ENCODE measurements at regions of chr2 and their contacts with region 1.

Region 1: DNA sequence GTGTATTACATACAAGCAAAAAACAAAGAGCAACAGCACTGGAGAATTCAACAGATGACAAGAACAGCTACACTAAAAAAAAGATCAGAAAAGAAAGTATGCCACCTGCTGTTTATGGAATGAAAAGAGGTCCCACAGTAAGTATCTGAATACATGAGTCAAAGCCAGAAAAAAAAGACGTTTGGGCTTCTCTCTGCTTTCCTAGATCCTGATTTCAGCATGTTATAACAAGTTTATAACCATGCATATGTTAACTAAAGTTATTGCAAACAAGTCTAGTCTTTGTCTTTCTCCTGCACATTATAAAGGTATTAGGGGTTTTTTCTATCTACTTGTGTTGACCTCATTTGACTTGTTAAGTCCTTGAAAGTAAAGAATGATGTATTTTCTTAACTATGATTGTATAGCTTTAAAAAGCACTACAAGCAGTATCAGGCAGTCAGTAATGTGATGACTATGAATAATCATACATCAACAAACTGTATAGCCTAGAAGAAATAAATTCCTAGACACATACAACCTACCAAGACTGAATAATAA is 108.5 kb upstream of the COL5A2 start:
- DNase-seq: peak in 5 of 9 donors; percentile 16 to 45 (median 34)
- ATAC-seq: peak; percentile 40
- H3K4me3 ChIP-seq: no peak overlapping the region
- H3K4me3 Mint-ChIP-seq: no peak overlapping the region
- H3K27ac ChIP-seq: no peak overlapping the region
- H3K27ac Mint-ChIP-seq: peak overlapping the region in 4 of 9 donors; percentile 1 to 13 (median 8)
- H3K4me1 ChIP-seq: no peaks in the 10 kb centered on the region
- H3K4me1 Mint-ChIP-seq: peaks cover 5 to 28% (median 16%) of the 10 kb centered on the region in 7 donors
- H3K27me3 ChIP-seq: no peaks in the 10 kb centered on the region
- H3K27me3 Mint-ChIP-seq: no peaks in the 10 kb centered on the region

Region 2: GRCh38 chr2:188524519-188525113 is 763.4 kb before region 1 on chr2:
- CTCF ChIA-PET with region 1: no interaction called
- POLR2A ChIA-PET with region 1: no interaction called
- intact Hi-C with region 1: loop called in 1 of 2 experiments (anchors 5 kb)
- DNase-seq: peak in 6 of 9 donors; percentile 4 to 40 (median 27)
- ATAC-seq: peak; percentile 61
- H3K4me3 ChIP-seq: no peak overlapping the region
- H3K4me3 Mint-ChIP-seq: no peak overlapping the region
- H3K27ac ChIP-seq: no peak overlapping the region
- H3K27ac Mint-ChIP-seq: no peak overlapping the region
- H3K4me1 ChIP-seq: no peaks in the 10 kb centered on the region
- H3K4me1 Mint-ChIP-seq: no peaks in the 10 kb centered on the region
- H3K27me3 ChIP-seq: no peaks in the 10 kb centered on the region
- H3K27me3 Mint-ChIP-seq: peaks cover 0 to 5% (median 2%) of the 10 kb centered on the region in 5 donors

Region 3: DNA sequence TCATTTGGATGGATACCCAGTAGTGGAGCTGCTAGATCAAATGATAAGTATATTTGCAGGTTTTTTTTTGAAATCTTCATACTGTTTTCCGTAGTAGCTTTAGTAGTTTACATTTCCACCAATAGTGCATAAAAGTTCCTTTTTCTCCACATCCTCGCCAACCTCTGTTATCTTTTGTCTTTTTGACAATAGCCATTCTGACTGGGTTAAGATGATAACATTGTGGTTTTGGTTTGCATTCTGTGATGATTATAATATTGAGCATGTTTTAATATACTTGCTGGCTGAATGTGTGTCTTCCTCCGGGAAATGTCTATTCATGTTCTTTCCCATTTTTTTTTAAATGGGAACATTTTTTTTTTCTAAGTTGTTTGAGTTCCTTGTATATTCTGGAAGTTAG is 736.4 kb before region 1 on chr2:
- CTCF ChIA-PET with region 1: no interaction called
- POLR2A ChIA-PET with region 1: no interaction called
- intact Hi-C with region 1: loop called in 1 of 2 experiments (anchors 10 kb)
- DNase-seq: no peak
- ATAC-seq: no peak
- H3K4me3 ChIP-seq: no peak overlapping the region
- H3K4me3 Mint-ChIP-seq: no peak overlapping the region
- H3K27ac ChIP-seq: no peak overlapping the region
- H3K27ac Mint-ChIP-seq: no peak overlapping the region
- H3K4me1 ChIP-seq: no peaks in the 10 kb centered on the region
- H3K4me1 Mint-ChIP-seq: no peaks in the 10 kb centered on the region
- H3K27me3 ChIP-seq: no peaks in the 10 kb centered on the region
- H3K27me3 Mint-ChIP-seq: peaks cover 0 to 6% (median 0%) of the 10 kb centered on the region in 5 donors

Region 4: DNA sequence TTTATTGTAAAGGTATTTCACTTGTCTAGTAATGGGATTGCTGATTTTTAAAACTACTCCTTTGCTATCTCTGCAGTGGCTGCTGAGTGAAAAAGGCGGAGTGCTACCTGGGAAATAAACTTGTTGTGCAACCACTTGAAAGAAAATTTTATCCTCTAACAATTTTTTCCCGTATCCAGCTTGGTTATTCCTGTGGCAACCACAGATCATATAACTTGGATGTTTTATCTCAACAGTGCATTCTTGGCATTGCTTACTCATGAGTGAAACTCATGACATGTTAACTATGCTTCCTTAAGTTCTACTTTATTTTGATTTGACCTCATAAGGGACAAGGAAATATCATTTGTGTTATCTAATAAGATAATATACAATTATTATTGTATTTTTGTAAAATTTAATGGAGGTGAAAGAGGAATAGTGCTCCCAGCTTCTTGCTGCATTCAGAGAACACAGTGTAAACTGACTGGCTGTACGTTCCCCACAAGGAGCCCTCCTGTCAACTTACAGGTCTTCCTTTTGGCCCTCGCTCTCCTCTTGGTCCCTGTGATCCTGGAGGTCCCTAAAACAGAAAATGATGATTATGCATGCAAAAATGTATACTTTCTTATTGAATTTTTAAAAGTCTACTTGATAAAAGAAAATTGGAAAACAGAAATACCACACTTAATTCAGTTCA is 191.1 kb before region 1 on chr2:
- CTCF ChIA-PET with region 1: interaction called, 7 read pairs
- POLR2A ChIA-PET with region 1: no interaction called
- intact Hi-C with region 1: loop called (anchors 1 kb)
- DNase-seq: no peak
- ATAC-seq: no peak
- H3K4me3 ChIP-seq: no peak overlapping the region
- H3K4me3 Mint-ChIP-seq: no peak overlapping the region
- H3K27ac ChIP-seq: no peak overlapping the region
- H3K27ac Mint-ChIP-seq: no peak overlapping the region
- H3K4me1 ChIP-seq: no peaks in the 10 kb centered on the region
- H3K4me1 Mint-ChIP-seq: peaks cover 0 to 5% (median 0%) of the 10 kb centered on the region in 7 donors
- H3K27me3 ChIP-seq: no peaks in the 10 kb centered on the region
- H3K27me3 Mint-ChIP-seq: no peaks in the 10 kb centered on the region

Region 5: GRCh38 chr2:189142893-189143759 is 144.9 kb before region 1 on chr2:
- CTCF ChIA-PET with region 1: interaction called, 20 read pairs
- POLR2A ChIA-PET with region 1: no interaction called
- intact Hi-C with region 1: loop called (anchors 1 kb)
- DNase-seq: peak in 8 of 9 donors; percentile 35 to 68 (median 56)
- ATAC-seq: peak; percentile 88
- H3K4me3 ChIP-seq: no peak overlapping the region
- H3K4me3 Mint-ChIP-seq: no peak overlapping the region
- H3K27ac ChIP-seq: no peak overlapping the region
- H3K27ac Mint-ChIP-seq: peak overlapping the region in 1 of 9 donors; percentile 10
- H3K4me1 ChIP-seq: no peaks in the 10 kb centered on the region
- H3K4me1 Mint-ChIP-seq: peaks cover 0 to 6% (median 0%) of the 10 kb centered on the region in 7 donors
- H3K27me3 ChIP-seq: no peaks in the 10 kb centered on the region
- H3K27me3 Mint-ChIP-seq: no peaks in the 10 kb centered on the region

Region 6: GRCh38 chr2:189302274-189302948 is 14.4 kb after region 1 on chr2:
- CTCF ChIA-PET with region 1: interaction called, 7 read pairs
- POLR2A ChIA-PET with region 1: no interaction called
- intact Hi-C with region 1: loop called in 1 of 2 experiments (anchors 1 kb)
- DNase-seq: no peak
- ATAC-seq: no peak
- H3K4me3 ChIP-seq: no peak overlapping the region
- H3K4me3 Mint-ChIP-seq: peak overlapping the region in 8 of 10 donors; percentile 4 to 74 (median 60)
- H3K27ac ChIP-seq: no peak overlapping the region
- H3K27ac Mint-ChIP-seq: peak overlapping the region in 8 of 9 donors; percentile 25 to 95 (median 70)
- H3K4me1 ChIP-seq: peaks cover 56 to 88% of the 10 kb centered on the region in 2 donors
- H3K4me1 Mint-ChIP-seq: peaks cover 57 to 96% (median 91%) of the 10 kb centered on the region in 7 donors
- H3K27me3 ChIP-seq: no peaks in the 10 kb centered on the region
- H3K27me3 Mint-ChIP-seq: no peaks in the 10 kb centered on the region

Region 7: GRCh38 chr2:189347540-189347939 is 59.5 kb after region 1 on chr2:
- CTCF ChIA-PET with region 1: interaction called, 4 read pairs
- POLR2A ChIA-PET with region 1: no interaction called
- intact Hi-C with region 1: loop called in 1 of 2 experiments (anchors 1 kb)
- DNase-seq: peak in 7 of 9 donors; percentile 14 to 58 (median 47)
- ATAC-seq: peak; percentile 52
- H3K4me3 ChIP-seq: no peak overlapping the region
- H3K4me3 Mint-ChIP-seq: no peak overlapping the region
- H3K27ac ChIP-seq: no peak overlapping the region
- H3K27ac Mint-ChIP-seq: peak overlapping the region in 1 of 9 donors; percentile 62
- H3K4me1 ChIP-seq: peaks cover 0 to 7% of the 10 kb centered on the region in 2 donors
- H3K4me1 Mint-ChIP-seq: peaks cover 7 to 22% (median 18%) of the 10 kb centered on the region in 7 donors
- H3K27me3 ChIP-seq: no peaks in the 10 kb centered on the region
- H3K27me3 Mint-ChIP-seq: no peaks in the 10 kb centered on the region

Region 8: DNA sequence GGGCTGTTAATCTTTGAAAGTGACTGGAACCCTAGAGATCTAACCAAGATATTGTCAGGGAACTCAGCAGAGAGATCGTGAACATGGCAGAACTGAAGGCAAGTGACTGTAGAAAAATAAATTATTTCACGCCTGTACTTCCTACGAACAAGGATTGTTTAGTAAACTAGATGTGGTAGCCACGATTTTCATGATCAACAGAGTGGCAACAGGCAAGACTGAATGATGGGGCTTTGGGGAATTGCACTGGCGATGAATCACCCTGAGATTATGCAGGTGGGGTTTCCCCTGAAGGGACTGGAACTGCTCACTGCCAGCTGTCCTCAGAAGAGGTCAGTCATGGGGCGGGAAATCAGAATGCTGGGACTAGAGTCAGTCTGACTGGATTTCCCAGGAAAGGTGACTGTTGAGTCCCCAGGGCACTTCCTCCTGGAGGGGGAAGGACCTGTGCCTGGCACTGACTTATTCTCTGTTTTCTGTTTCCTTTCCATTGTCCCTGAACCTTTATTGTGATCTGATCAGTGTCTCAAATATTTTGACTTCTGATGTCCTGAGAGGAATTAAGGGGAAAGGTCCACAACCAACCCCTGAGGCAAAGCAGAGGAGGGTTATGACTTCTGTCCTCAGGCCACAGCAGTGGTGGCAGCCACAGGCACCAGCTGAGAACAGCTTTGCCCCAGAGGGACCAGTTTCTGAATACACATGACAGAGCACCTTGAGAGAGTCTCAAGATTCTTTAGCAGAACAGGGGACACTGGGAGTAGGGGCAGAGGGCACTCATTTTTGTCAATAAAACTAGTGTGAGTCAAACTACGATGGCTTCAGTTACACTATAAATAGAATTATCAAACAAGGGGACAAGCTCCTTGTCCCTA is 1430.8 kb after region 1 on chr2:
- CTCF ChIA-PET with region 1: no interaction called
- POLR2A ChIA-PET with region 1: no interaction called
- intact Hi-C with region 1: no loop called
- DNase-seq: peak in 1 of 9 donors; percentile 68
- ATAC-seq: peak; percentile 29
- H3K4me3 ChIP-seq: no peak overlapping the region
- H3K4me3 Mint-ChIP-seq: no peak overlapping the region
- H3K27ac ChIP-seq: no peak overlapping the region
- H3K27ac Mint-ChIP-seq: peak overlapping the region in 1 of 9 donors; percentile 45
- H3K4me1 ChIP-seq: peaks cover 0 to 8% of the 10 kb centered on the region in 2 donors
- H3K4me1 Mint-ChIP-seq: peaks cover 0 to 31% (median 16%) of the 10 kb centered on the region in 7 donors
- H3K27me3 ChIP-seq: no peaks in the 10 kb centered on the region
- H3K27me3 Mint-ChIP-seq: no peaks in the 10 kb centered on the region